Common myeloid progenitor, CD34-positive (primary cell): ENCODE measurements at regions of chr9 and their contacts with region 1.

Region 1: GRCh38 chr9:112443200-112443599 is 43.4 kb upstream of the KIAA1958 start:
- DNase-seq: peak; percentile 48 to 62 (median 61)
- H3K4me3 ChIP-seq: no peak overlapping the region
- H3K27ac ChIP-seq: no peak overlapping the region
- H3K4me1 ChIP-seq: peaks cover 0 to 31% (median 15%) of the 10 kb centered on the region in 4 experiments
- H3K27me3 ChIP-seq: no peaks in the 10 kb centered on the region

Region 2: DNA sequence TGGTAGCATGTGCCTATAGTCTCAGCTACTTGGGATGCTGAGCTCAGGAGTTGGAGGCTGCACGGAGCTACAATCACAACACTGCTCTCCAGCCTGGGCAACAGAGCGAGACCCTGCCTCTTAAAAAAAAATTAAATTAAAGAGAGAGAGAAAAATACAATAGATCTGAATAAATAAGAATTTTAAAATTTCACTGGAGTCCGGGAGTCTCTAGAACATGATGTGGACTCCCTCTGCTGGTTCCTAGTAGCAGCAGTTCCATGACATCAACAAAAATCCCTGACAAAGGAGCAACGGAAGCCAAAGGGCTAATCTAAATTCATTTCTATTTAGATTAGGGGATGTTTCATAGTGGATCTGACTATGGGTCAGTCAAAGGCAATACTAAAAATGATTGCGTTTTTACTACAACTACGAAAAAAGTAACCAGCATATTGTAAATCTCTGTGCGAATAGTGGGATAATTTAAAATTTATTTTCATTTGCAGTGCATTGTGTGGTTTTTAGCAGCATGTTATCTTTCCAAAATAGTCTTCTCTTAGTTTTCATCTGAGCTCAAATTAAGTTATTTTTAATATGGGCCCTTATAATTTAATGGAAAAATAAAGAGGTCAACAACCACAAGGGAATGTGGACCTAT is 268.0 kb after region 1 on chr9:
- CTCF ChIA-PET with region 1: interaction called, 13 read pairs
- POLR2A ChIA-PET with region 1: no interaction called
- DNase-seq: peak in 2 of 3 donors; percentile 41 to 49
- H3K4me3 ChIP-seq: no peak overlapping the region
- H3K27ac ChIP-seq: no peak overlapping the region
- H3K4me1 ChIP-seq: peaks cover 0 to 1% (median 0%) of the 10 kb centered on the region in 4 experiments
- H3K27me3 ChIP-seq: no peaks in the 10 kb centered on the region

Region 3: GRCh38 chr9:112793213-112793810 is 350.1 kb after region 1 on chr9:
- CTCF ChIA-PET with region 1: interaction called, 13 read pairs
- POLR2A ChIA-PET with region 1: no interaction called
- DNase-seq: peak; percentile 73 to 85 (median 82)
- H3K4me3 ChIP-seq: no peak overlapping the region
- H3K27ac ChIP-seq: no peak overlapping the region
- H3K4me1 ChIP-seq: no peaks in the 10 kb centered on the region
- H3K27me3 ChIP-seq: no peaks in the 10 kb centered on the region

Region 4: DNA sequence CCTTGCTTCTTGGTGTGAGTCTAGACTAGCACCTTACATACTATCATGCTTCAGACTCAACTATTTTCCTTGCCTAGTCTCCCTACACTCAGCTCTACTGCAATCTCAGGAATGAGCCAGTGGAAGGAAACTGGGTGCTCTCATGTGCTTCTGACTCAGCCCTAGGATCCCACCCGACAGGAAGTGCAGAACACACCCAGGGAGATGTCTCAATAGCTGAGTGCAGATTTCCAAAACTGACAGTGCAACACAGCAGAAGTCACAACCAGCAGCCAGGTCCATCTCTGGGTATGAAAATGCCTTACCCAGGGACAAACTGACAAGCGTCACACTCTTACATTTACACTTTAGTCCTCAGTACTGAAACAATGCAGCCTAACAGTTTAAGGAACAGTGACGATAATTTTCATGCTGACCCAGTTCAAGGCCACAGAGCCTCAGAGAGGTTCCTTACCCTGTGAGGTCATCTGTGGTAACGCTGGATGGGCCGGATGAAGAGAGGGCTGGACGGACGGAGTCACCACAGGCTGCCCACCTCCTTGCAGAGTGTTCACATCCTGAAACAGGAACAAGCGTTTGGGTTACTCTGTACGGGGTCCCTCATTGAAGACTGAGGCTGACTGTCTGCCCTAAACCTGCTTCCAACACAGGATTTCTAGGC is 744.9 kb after region 1 on chr9:
- CTCF ChIA-PET with region 1: no interaction called
- POLR2A ChIA-PET with region 1: no interaction called
- DNase-seq: peak in 2 of 3 donors; percentile 16 to 24
- H3K4me3 ChIP-seq: no peak overlapping the region
- H3K27ac ChIP-seq: peak overlapping the region in 1 of 2 experiments; percentile 43
- H3K4me1 ChIP-seq: peaks cover 0 to 10% (median 0%) of the 10 kb centered on the region in 4 experiments
- H3K27me3 ChIP-seq: no peaks in the 10 kb centered on the region